Vagina (tissue), 2 donors: ENCODE measurements at regions of chr9 and their contacts with region 1.

Region 1: GRCh38 chr9:74444369-74444768 is 52.8 kb upstream of the RORB start:
- DNase-seq: no peak
- H3K4me3 ChIP-seq: no peak overlapping the region
- H3K27ac ChIP-seq: no peak overlapping the region
- H3K4me1 ChIP-seq: no peaks in the 10 kb centered on the region
- H3K27me3 ChIP-seq: no peaks in the 10 kb centered on the region
- CTCF ChIP-seq: no peak
- POLR2A ChIP-seq: no peak

Region 2: DNA sequence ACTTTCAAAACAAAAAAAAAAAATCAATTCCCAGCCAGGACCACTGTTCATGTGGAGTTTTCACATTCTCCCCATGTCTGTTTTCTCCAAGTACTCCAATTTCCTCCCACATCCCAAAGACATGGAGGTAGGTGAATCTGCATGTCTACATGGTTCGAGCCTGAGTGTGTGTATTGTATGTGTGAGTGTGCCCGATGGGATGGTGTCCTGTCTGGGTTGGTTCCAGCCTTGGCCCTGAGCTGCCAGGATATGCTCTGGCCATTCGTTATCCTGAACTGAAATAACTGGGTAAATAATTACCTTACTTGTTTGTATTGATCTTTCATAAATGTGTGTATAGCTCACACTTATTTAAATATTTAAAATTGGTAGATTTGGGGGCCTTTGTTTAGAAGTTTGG is 399.5 kb before region 1 on chr9:
- intact Hi-C with region 1: no loop called
- DNase-seq: no peak
- H3K4me3 ChIP-seq: no peak overlapping the region
- H3K27ac ChIP-seq: no peak overlapping the region
- H3K4me1 ChIP-seq: no peaks in the 10 kb centered on the region
- H3K27me3 ChIP-seq: no peaks in the 10 kb centered on the region
- CTCF ChIP-seq: no peak
- POLR2A ChIP-seq: no peak

Region 3: DNA sequence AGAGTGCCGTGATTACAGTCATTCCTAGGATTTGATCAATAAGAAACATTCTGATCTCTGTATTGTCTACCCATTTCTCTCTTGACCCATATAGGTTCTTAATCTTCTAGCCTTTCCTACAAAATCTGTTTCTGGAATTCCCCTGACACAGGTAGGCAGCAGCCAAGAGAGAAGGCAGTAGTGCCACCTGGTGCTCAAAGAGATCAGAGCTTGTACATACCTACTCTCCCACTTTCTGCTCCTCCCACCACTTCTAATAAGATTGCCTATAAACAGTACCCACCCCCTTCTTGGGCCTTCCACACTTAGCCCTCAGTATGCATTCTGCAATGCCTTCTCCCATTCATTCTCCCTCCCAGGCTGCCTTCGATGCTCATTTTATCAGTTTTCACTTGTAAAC is 64.7 kb before region 1 on chr9:
- intact Hi-C with region 1: loop called (anchors 10 kb)
- DNase-seq: no peak
- H3K4me3 ChIP-seq: no peak overlapping the region
- H3K27ac ChIP-seq: no peak overlapping the region
- H3K4me1 ChIP-seq: no peaks in the 10 kb centered on the region
- H3K27me3 ChIP-seq: no peaks in the 10 kb centered on the region
- CTCF ChIP-seq: no peak
- POLR2A ChIP-seq: no peak

Region 4: GRCh38 chr9:74431467-74431866 is 12.9 kb before region 1 on chr9:
- intact Hi-C with region 1: no loop called
- DNase-seq: no peak
- H3K4me3 ChIP-seq: no peak overlapping the region
- H3K27ac ChIP-seq: no peak overlapping the region
- H3K4me1 ChIP-seq: no peaks in the 10 kb centered on the region
- H3K27me3 ChIP-seq: no peaks in the 10 kb centered on the region
- CTCF ChIP-seq: no peak
- POLR2A ChIP-seq: no peak